Dorsolateral prefrontal cortex (tissue), 120 donors: ENCODE measurements at regions of chr20 and their contacts with region 1.

Region 1: DNA sequence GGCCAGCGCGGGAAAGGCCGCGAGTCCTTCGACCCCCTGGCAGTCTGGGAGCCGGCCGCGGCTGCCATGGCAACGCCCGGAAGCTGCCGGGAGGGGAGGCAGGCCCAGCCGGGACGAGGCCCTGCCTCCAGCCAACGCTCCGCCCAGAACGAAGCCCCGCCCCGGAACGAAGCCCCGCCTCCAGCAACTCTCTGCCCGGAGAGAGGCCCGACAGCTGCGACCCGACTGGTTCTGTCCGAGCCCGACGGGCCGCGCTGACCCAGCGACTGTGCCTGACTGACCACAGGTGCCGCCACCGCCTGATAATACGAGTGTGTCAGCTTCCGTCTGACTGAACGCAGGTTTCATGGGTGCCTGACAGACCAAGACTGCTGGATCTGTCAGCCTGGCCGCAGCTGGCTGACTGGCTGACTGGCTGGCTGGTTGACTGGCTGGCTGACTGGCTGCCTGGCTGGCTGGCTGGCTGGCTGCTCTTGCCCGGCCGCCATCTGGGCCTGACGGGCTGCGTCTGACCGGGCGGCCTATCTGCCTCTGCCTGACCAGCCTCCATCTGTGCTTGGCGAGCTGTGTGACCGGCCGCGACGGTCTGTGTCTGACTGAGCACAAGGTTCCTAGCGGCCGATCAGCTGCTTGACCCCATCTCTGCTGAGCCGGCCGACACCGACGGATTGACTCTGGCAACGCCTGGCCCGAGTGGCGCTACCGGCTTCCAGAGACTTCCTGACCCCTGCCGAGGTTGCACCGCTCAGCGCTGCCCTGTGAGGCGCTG is 89.7 kb upstream of the EPB41L1 start:
- DNase-seq: peak; percentile 91 to 98 (median 94)
- H3K4me3 ChIP-seq: peak overlapping the region; percentile 34 to 92 (median 68)
- H3K27ac ChIP-seq: peak overlapping the region; percentile 14 to 93 (median 77)
- H3K27me3 ChIP-seq: no peaks in the 10 kb centered on the region
- CTCF ChIP-seq: peak in 18 of 56 donors; percentile 7 to 40 (median 20)

Region 2: GRCh38 chr20:36135159-36135558 is 70.3 kb after region 1 on chr20:
- intact Hi-C with region 1: no loop called
- DNase-seq: no peak
- H3K4me3 ChIP-seq: no peak overlapping the region
- H3K27ac ChIP-seq: no peak overlapping the region
- H3K27me3 ChIP-seq: no peaks in the 10 kb centered on the region
- CTCF ChIP-seq: no peak

Region 3: GRCh38 chr20:36153736-36154699 is 89.2 kb after region 1 on chr20:
- intact Hi-C with region 1: loop called in 1 of 2 experiments (anchors 10 kb)
- DNase-seq: peak; percentile 76 to 92 (median 84)
- H3K4me3 ChIP-seq: peak overlapping the region; percentile 31 to 94 (median 78)
- H3K27ac ChIP-seq: peak overlapping the region; percentile 74 to 97 (median 93)
- H3K27me3 ChIP-seq: no peaks in the 10 kb centered on the region
- CTCF ChIP-seq: no peak